ENCODE measurements at regions of chr1 and their contacts with region 1.

Region 1: DNA sequence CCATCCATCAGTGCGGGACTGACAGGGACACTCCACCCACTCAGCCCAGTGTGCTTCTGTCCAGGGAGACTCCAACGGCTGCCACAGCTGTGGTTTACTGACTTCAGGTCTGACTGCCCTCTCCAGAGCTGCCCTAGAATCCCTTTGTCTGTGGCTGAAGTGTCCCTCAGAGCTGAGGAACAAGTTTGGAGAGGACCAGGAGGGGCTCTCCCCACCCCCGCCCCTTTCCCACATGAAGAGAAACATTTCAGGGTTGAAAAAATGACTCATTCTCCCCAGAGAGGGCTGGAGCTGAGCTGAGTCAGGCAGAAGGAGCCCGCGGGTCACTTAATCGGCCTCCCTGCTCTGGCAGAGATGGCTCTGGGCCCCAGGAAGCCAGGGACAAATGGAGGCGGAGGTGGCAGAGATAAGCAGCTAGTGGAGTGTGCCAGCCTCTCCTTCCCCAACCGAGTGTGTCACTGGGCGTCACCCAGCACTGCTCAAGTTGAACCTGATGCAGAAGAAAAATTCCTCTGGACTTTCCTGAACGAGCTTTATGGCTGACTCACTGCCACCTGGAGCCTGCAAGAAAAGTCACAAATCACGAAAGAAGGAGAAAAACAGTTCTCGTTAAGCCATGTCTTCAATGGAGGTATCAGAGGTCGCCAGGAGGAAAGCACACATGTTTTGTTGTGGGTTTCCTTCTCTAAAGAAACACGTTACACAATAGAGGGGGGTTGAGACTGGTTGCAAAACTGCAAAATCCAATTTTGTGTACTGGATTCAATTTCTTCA is 34.3 kb upstream of the ECE1 start:
- DNase-seq: no peak
- H3K4me3 ChIP-seq: peak overlapping the region; percentile 20
- CTCF ChIP-seq: no peak

Region 2: DNA sequence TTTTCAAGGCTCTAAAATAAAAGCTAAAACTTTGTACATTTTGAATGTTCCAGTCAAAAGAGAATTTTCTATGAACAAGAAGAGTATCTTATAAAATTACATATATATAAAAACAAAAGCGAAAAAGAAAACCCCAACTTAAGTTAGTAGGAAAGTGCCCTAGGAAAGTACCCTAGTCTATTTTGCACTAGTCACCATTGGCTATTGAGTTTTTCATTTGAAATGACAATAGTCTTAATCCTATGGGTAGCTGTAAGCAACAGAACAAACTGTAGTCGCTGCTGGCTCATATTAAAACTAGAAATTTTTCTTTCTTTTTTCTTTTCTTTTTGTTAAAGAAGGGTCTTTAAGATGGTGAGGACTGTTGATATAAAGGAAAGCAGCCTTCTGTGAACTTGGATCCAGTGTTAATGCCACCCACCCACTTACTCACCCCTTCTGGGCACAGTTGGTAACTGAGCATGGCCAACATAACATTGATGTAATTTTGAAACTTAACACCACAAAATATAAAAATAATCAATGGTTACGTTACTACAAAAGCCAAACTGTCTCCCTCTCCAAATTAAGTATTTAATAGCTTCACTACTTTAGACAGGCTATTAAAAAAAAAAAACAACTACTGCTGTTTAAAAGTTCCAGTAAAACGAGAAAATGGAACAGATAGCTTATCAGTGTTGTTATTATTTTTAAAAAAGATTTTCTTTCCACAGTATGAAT is 324.9 kb before region 1 on chr1:
- CTCF ChIA-PET with region 1: no interaction called
- POLR2A ChIA-PET with region 1: no interaction called
- DNase-seq: no peak
- H3K4me3 ChIP-seq: no peak overlapping the region
- CTCF ChIP-seq: no peak

Region 3: GRCh38 chr1:21313203-21313885 is 11.2 kb before region 1 on chr1:
- CTCF ChIA-PET with region 1: interaction called, 11 read pairs
- POLR2A ChIA-PET with region 1: no interaction called
- DNase-seq: no peak
- H3K4me3 ChIP-seq: no peak overlapping the region
- CTCF ChIP-seq: no peak

Measured in AG04449 (cell line).